ENCODE measurements at regions of chr14 and their contacts with region 1.

Region 1: DNA sequence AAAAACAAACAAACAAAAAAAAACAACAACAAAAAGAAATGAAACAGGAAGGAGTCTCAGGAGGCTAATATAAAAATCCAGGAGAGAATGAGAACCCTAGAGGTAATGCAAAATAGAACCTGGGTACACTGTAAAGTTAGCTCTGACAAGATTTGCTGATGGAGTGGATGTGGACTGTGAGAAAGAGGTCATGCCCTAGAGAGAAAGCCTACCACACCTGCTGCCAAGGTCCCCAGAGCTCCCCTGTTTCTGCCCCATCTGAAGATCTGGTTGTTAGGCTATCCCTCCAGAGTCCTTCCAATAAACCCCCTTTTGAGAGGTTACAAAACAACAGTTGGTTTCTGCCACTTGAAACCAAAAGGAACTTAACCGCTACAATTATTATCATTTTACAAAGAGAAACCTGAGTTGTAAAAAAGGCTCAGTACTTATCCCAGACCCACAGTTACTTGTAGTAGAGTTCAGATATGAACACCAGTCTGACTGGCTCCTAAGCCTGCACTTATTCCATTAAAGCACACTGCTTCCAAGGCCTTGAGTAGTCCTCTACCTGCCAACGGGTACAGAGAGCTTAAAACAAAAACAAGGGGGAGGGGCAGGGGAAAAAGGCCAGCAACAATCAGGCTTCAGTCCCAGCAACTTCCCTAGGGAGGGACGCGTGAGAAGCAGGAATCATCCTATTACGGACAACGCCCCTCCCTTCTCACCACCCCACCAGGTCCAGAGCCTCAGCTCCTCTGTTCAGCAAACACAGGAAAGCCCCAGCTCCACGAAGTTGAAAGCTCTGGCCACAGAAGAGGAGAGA is 27.7 kb downstream of the PPP1R13B start:
- DNase-seq: peak; percentile 47
- H3K4me3 ChIP-seq: no peak overlapping the region
- H3K27ac ChIP-seq: peak overlapping the region in 2 of 4 donors; percentile 30 to 59
- H3K4me1 ChIP-seq: peaks cover 0 to 22% (median 12%) of the 10 kb centered on the region in 4 donors
- H3K27me3 ChIP-seq: no peaks in the 10 kb centered on the region
- CTCF ChIP-seq: no peak
- EP300 ChIP-seq: no peak
- POLR2A ChIP-seq: no peak

Region 2: GRCh38 chr14:102262929-102263462 is 1556.7 kb before region 1 on chr14:
- in situ Hi-C with region 1: no loop called
- intact Hi-C with region 1: loop called (anchors 10 kb)
- DNase-seq: no peak
- H3K4me3 ChIP-seq: no peak overlapping the region
- H3K27ac ChIP-seq: no peak overlapping the region
- H3K4me1 ChIP-seq: no peaks in the 10 kb centered on the region
- H3K27me3 ChIP-seq: no peaks in the 10 kb centered on the region
- CTCF ChIP-seq: no peak
- EP300 ChIP-seq: no peak
- POLR2A ChIP-seq: no peak

Region 3: DNA sequence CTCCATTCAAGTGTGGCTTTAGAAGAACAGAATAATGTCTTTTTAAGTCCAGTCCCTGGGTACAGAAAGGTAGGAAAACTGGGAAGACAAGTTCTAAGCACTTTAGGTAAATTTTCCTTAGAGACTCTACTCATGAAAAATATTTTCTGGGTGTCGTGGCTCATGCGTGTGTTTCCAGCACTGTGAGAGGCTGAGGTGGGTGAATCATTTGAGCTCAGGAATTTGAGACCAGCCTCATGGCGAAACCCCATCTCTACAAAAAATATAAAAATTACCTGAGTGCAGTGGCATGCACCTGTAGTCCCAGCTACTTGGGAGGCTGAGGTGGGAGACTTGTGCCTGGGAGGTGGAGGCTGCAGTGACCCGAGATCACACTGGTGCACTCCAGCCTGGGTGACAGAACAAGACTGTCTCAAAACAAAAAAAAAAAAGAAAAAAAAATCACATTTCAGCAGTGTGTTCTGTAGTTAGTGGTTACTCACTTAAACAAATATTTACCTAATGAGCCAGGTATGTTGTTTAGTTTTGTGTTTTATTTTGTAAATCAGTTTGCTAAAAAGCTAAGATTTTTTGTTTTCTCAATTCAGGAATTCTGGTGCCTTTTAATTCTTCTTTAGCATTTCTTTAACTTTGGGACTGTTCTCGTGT is 175.0 kb after region 1 on chr14:
- in situ Hi-C with region 1: loop called in 1 of 4 experiments (anchors 25 kb)
- intact Hi-C with region 1: loop called (anchors 10 kb)
- DNase-seq: no peak
- H3K4me3 ChIP-seq: no peak overlapping the region
- H3K27ac ChIP-seq: no peak overlapping the region
- H3K4me1 ChIP-seq: no peaks in the 10 kb centered on the region
- H3K27me3 ChIP-seq: peaks cover 34% of the 10 kb centered on the region
- CTCF ChIP-seq: no peak
- EP300 ChIP-seq: no peak
- POLR2A ChIP-seq: no peak